ENCODE measurements at regions of chr16 and their contacts with region 1.

Region 1: GRCh38 chr16:67246934-67247697 is at the start of gene FHOD1:
- DNase-seq: peak; percentile 98
- H3K4me3 ChIP-seq: peak within 1 kb of the TSS; percentile 60 to 89 (median 83)
- H3K27ac ChIP-seq: peak within 1 kb of the TSS; percentile 88
- H3K4me1 ChIP-seq: peaks cover 50% of the 10 kb centered on the region
- H3K27me3 ChIP-seq: peaks cover 0 to 3% of the 10 kb centered on the region in 2 experiments
- CTCF ChIP-seq: no peak
- POLR2A ChIP-seq: peak; percentile 93
- total RNA-seq, gene FHOD1: 104 and 124 TPM in 2 replicates

Region 2: DNA sequence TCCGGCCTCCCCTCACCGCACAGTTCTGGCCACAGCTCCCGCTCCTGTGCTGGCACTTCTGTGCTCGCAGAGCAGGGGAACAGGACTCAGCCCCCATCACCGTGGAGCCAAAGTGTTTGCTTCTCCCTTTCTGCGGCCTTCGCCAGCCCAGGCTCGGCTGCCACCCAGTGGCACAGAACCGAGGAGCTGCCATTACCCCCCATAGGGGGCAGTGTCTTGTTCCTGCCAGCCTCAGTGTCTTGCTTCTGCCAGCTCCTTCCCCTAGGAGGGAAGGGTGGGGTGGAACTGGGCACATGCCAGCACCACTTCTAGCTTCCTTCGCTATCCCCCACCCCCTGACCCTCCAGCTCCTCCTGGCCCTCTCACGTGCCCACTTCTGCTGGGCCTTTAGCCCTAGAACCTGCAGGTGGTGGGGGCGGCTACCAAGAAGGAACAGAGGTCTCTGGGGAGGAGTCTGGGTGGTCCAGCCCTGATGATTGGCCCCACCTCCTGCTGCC is 48.8 kb before region 1 on chr16:
- CTCF ChIA-PET with region 1: interaction called, 12 read pairs
- POLR2A ChIA-PET with region 1: interaction called, 6 read pairs
- dilution Hi-C with region 1: no loop called
- intact Hi-C with region 1: loop called (anchors 1 kb)
- DNase-seq: peak; percentile 63
- H3K4me3 ChIP-seq: no peak overlapping the region
- H3K27ac ChIP-seq: no peak overlapping the region
- H3K4me1 ChIP-seq: peaks cover 12% of the 10 kb centered on the region
- H3K27me3 ChIP-seq: no peaks in the 10 kb centered on the region
- CTCF ChIP-seq: peak; percentile 92 to 96
- POLR2A ChIP-seq: no peak

Region 3: DNA sequence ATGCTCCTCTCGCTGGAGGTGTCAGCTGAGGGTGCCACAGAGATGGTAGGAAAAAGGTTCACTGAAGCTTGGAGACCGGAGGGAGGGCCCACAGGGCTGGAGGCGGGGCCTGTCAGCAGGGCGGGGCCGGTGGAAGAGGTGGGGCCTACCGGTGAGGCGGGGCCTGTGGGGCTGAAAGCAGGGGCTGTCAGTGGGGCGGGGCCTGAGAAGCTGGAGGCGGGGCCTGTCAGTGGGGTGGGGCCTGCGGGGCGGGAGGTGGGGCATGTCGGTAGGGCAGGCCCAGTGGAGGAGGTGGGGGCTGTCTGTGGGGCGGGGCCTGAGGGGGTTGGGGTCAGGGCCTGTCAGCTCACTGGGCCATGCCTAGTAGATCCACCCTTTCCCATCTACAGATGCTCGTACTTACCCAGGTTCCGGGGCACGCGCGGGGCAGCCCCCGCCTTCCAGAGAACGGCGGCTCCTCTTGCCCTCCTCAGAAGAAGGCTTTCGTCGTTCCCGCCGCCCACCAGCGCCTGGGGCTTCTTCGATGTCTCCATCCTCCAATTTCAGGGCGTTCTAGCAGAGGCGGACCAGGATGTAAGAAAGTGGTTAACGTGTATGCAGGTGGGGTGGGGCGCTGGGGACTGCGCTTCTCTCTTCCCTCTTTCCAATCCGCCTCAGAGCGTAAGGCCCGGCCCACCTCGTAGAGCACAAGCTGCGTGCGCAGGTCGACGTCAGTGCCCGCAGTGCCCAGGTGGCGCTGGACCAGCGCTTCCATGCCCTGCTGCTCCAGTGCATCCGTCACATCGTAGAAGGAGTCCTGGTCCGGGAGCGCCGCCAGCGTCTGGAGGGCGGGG is 10.3 kb before region 1 on chr16:
- CTCF ChIA-PET with region 1: interaction called, 10 read pairs
- POLR2A ChIA-PET with region 1: no interaction called
- dilution Hi-C with region 1: no loop called
- intact Hi-C with region 1: loop called (anchors 1 kb)
- DNase-seq: peak; percentile 60
- H3K4me3 ChIP-seq: no peak overlapping the region
- H3K27ac ChIP-seq: no peak overlapping the region
- H3K4me1 ChIP-seq: peaks cover 12% of the 10 kb centered on the region
- H3K27me3 ChIP-seq: no peaks in the 10 kb centered on the region
- CTCF ChIP-seq: no peak
- POLR2A ChIP-seq: no peak

Region 4: GRCh38 chr16:67268136-67268579 is 21.0 kb after region 1 on chr16:
- CTCF ChIA-PET with region 1: interaction called, 8 read pairs
- POLR2A ChIA-PET with region 1: interaction called, 9 read pairs
- dilution Hi-C with region 1: no loop called
- intact Hi-C with region 1: loop called (anchors 1 kb)
- DNase-seq: peak; percentile 87
- H3K4me3 ChIP-seq: no peak overlapping the region
- H3K27ac ChIP-seq: peak overlapping the region; percentile 43
- H3K4me1 ChIP-seq: peaks cover 23% of the 10 kb centered on the region
- H3K27me3 ChIP-seq: no peaks in the 10 kb centered on the region
- CTCF ChIP-seq: no peak
- POLR2A ChIP-seq: peak; percentile 26

Region 5: DNA sequence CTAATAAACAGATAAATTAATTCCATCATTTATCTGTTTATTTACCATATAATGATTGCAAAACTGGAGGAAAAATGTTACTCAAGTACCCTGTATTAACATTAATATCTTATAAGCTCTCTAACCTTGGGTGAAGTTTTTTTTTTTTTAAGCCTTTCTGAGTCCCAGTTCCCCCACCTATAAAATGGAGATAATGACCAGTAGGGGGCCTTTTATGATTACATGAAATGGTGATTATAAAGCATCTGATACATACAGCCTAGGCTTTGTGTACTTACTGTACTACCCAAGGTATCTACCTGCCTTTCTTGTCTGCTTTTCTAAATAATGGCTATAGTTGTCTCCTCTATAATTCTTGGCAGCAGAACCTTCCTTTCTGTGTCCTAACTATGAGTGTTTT is 102.1 kb after region 1 on chr16:
- CTCF ChIA-PET with region 1: no interaction called
- POLR2A ChIA-PET with region 1: no interaction called
- dilution Hi-C with region 1: no loop called
- intact Hi-C with region 1: loop called (anchors 1 kb)
- DNase-seq: peak; percentile 59
- H3K4me3 ChIP-seq: no peak overlapping the region
- H3K27ac ChIP-seq: no peak overlapping the region
- H3K4me1 ChIP-seq: peaks cover 23% of the 10 kb centered on the region
- H3K27me3 ChIP-seq: no peaks in the 10 kb centered on the region
- CTCF ChIP-seq: peak; percentile 32 to 49
- POLR2A ChIP-seq: no peak